ENCODE measurements at regions of chr1 and their contacts with region 1.

Region 1: DNA sequence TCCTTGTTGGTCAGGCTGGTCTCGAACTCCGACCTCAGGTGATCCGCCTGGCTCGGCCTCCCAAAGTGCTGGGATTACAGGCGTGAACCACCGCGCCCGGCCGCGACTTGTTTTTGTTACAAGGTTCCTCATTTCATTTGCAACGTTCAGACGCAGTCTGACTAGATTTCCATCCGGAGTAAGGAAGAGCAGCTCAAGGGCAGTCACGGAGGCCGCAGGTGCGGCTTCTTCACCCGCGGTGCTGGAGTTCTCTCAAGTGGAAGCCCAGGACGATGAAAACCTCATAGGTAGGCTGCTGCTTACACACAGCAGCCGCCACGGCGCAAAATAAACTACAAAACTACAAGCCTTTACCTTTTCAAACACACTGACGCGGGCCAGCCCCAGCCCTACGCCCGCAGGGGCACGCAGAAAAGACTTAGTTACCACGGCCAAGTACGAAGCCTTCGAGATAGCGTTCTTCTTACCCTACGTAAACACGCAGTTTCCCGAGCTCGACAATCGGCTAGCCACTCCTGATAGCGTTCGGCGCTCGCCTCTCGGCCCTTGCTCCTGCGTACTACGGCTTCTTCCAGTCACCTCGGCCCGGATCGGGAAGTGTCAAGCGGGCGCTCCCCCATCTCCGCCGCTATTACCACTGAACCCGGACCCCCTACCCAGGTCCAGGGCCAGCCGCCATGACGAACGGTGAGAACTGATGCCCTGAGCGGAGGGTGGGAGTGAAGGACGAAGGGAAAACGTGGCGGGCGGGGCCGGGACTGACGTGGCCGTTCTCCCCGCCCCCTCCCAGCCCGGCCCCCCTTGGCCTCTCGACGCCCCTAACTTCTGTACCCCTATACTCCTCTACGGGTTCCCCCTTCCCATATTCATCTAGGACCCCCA is at the start of gene TMEM167B:
- DNase-seq: peak; percentile 88
- H3K4me3 Mint-ChIP-seq: peak within 1 kb of the TSS; percentile 99
- H3K27ac Mint-ChIP-seq: peak within 1 kb of the TSS; percentile 96
- H3K4me1 Mint-ChIP-seq: peaks cover 25% of the 10 kb centered on the region
- H3K27me3 Mint-ChIP-seq: no peaks in the 10 kb centered on the region
- total RNA-seq, gene TMEM167B: 27.4 and 29.9 TPM in 2 replicates

Region 2: DNA sequence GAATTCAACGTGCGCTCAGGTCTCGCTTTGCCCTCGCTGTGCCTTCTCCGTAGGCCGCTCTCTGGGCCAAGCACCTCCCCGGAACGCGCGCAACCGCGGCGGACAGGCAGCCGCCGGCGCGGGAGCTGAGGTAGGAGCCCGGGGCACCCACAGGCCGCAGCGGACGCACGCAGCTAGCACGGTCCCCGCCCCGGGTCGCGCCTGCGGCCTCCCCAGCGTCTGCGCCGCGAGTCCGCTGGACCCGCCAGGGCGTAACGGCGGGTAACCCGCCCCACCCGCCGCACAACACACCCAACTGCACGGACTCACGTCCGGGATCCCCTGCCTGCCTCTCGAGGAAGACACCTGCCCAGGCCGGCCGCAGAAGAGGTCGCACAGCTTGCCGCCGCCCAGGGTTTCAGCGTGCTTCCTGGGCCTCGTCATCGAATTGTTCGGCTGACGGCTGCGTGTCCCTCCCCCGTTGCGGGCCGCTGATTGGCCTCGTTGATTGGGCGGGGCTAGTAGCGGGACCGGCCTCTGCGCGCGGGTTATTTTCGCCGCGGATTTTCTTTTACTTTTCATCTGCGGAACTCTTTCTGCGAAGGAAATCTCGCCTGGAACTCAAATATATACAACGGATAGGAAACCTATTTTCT is 127.3 kb before region 1 on chr1 and contains the start of gene CLCC1:
- intact Hi-C with region 1: loop called (anchors 2 kb)
- DNase-seq: peak; percentile 93
- H3K4me3 Mint-ChIP-seq: peak within 1 kb of the TSS; percentile 89
- H3K27ac Mint-ChIP-seq: peak within 1 kb of the TSS; percentile 94
- H3K4me1 Mint-ChIP-seq: peaks cover 17% of the 10 kb centered on the region
- H3K27me3 Mint-ChIP-seq: no peaks in the 10 kb centered on the region
- total RNA-seq, gene CLCC1: 21.8 and 26.7 TPM in 2 replicates

Region 3: DNA sequence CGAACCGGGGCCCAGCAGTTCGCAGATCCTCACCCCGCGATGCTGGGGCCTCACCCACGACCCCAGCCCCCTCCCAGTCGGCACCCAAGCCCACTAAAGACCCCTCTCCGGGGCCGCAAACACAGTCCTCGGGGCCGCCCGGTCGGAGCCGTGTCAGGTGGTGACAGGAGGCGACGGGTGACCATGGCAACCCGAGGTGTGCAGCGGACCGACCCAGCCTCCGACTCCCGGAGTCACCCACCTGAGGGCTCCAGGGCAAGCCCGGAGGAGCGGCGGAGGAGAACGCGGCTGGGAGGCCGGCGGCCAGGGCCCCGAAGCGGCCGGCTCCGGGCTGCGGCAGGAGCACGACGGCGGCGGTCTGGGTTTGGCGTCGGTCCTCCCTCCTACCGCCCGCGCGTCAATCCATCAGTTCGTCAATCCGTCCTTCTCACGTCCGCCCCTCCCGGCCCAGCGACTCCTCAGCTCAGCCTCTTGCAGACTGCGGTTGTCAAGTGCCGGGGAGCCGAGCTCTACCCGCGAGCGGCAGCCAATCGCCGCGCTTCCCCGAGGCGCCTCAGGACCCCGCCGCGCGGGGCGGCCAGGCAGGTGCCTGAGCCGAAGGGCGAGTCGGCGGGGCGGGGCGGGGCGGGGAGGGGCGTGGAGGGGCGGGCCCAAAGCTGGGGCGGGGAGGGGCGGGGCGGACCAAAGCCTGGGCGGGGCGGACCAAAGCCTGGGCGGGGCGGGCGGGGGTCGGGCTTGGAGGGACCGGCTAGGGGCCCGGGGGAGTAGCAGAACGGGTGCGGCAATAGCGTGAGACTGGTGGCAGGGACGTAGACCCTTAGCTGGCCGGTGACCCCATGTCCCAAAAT is 48.6 kb before region 1 on chr1 and contains the start of gene WDR47:
- intact Hi-C with region 1: loop called (anchors 2 kb)
- DNase-seq: peak; percentile 95
- H3K4me3 Mint-ChIP-seq: peak within 1 kb of the TSS; percentile 89
- H3K27ac Mint-ChIP-seq: peak within 1 kb of the TSS; percentile 83
- H3K4me1 Mint-ChIP-seq: peaks cover 8% of the 10 kb centered on the region
- H3K27me3 Mint-ChIP-seq: peaks cover 8% of the 10 kb centered on the region
- total RNA-seq, gene WDR47: 10.4 and 11.1 TPM in 2 replicates

Region 4: GRCh38 chr1:109065137-109065536 is 25.3 kb before region 1 on chr1:
- intact Hi-C with region 1: no loop called
- DNase-seq: no peak
- H3K4me3 Mint-ChIP-seq: no peak overlapping the region
- H3K27ac Mint-ChIP-seq: no peak overlapping the region
- H3K4me1 Mint-ChIP-seq: peaks cover 2% of the 10 kb centered on the region
- H3K27me3 Mint-ChIP-seq: no peaks in the 10 kb centered on the region

Region 5: GRCh38 chr1:109075531-109076490 is 14.6 kb before region 1 on chr1 and contains the start of gene TAF13:
- intact Hi-C with region 1: loop called (anchors 1 kb)
- DNase-seq: peak; percentile 83
- H3K4me3 Mint-ChIP-seq: peak within 1 kb of the TSS; percentile 96
- H3K27ac Mint-ChIP-seq: peak within 1 kb of the TSS; percentile 88
- H3K4me1 Mint-ChIP-seq: peaks cover 13% of the 10 kb centered on the region
- H3K27me3 Mint-ChIP-seq: no peaks in the 10 kb centered on the region
- total RNA-seq, gene TAF13: 21.6 and 25.0 TPM in 2 replicates

Region 6: DNA sequence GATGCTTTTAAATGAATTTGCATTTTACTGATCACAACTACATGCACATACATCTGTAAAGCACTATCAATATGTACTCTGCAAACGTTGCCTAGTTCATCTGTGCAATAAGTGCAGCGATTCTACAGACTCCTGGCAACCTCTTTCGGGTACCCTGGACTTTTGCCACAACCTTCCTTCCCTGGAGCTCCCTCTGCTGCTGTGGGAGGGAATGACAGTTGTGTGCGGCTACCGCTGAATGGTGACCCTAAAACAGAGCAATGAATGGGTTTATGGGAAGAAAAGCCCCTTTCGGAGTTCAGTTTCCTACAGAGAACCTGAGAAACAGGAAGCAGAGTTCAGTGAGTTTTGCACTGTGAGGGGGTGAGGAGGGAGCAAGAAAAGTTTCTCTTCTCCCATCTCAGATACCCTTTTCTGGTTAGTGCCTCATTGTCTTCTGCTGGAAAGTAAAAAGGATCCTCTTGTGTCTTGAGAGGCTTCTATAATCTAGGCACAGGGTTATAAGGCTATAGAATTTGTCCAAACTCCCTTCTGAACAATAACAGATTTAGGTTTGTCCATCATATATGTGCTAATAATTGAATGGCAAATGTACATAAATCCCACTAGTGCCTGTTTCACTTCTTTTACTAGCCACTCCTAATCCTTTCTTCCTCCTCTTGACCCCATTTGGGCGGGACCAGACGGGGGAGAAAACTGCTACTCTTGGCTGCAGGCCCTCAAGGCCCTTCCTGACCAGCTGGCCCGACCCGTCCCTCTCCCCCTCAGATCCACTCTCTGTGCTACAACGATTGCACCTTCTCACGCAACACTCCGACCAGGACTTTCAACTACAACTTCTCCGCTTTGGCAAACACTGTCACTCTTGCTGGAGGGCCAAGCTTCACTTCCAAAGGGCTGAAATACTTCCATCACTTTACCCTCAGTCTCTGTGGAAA is 103.5 kb after region 1 on chr1:
- intact Hi-C with region 1: loop called (anchors 5 kb)
- DNase-seq: peak; percentile 50
- H3K4me3 Mint-ChIP-seq: no peak overlapping the region
- H3K27ac Mint-ChIP-seq: no peak overlapping the region
- H3K4me1 Mint-ChIP-seq: peaks cover 10% of the 10 kb centered on the region
- H3K27me3 Mint-ChIP-seq: no peaks in the 10 kb centered on the region